A673 (cell line): ENCODE measurements at regions of chr17 and their contacts with region 1.

Region 1: GRCh38 chr17:8057691-8058114 is 18.8 kb downstream of the ALOX15B start:
- DNase-seq: peak; percentile 92
- H3K4me3 ChIP-seq: no peak overlapping the region
- H3K27ac ChIP-seq: no peak overlapping the region
- H3K4me1 ChIP-seq: peaks cover 17% of the 10 kb centered on the region
- H3K27me3 ChIP-seq: peaks cover 14% of the 10 kb centered on the region
- CTCF ChIP-seq: peak; percentile 80

Region 2: DNA sequence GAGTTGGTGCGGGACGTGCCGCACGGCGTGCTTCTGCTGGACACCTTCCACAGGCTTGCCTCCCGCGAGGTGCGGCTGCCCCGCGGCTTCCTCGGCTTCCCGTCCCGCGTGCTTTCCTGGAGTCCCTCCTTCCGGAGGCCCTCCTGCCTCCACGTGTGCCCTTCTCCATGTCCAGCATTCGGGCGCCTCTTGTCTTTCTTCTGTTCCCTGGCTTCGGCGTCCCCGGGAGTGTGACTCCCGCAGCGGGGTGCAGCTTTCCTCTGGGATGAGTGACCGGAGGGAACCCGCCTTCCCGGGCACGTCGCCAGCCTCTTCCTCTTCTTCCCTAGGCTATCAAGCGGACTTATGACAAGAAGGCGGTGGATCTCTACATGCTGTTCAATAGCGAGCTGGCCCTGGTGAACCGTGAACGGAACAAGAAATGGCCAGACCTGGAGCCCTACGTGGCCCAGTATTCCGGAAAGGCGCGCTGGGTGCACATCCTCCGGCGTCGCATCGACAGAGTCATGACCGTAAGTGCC is 317.2 kb before region 1 on chr17:
- CTCF ChIA-PET with region 1: interaction called, 10 read pairs
- POLR2A ChIA-PET with region 1: no interaction called
- intact Hi-C with region 1: loop called (anchors 5 kb)
- DNase-seq: peak; percentile 26
- H3K4me3 ChIP-seq: peak overlapping the region; percentile 9
- H3K27ac ChIP-seq: no peak overlapping the region
- H3K4me1 ChIP-seq: peaks cover 3% of the 10 kb centered on the region
- H3K27me3 ChIP-seq: peaks cover 8% of the 10 kb centered on the region
- CTCF ChIP-seq: no peak

Region 3: GRCh38 chr17:7912927-7913524 is 144.7 kb before region 1 on chr17:
- CTCF ChIA-PET with region 1: interaction called, 5 read pairs
- POLR2A ChIA-PET with region 1: no interaction called
- intact Hi-C with region 1: loop called (anchors 1 kb)
- DNase-seq: peak; percentile 75
- H3K4me3 ChIP-seq: no peak overlapping the region
- H3K27ac ChIP-seq: no peak overlapping the region
- H3K4me1 ChIP-seq: peaks cover 15% of the 10 kb centered on the region
- H3K27me3 ChIP-seq: no peaks in the 10 kb centered on the region
- CTCF ChIP-seq: peak; percentile 70

Region 4: DNA sequence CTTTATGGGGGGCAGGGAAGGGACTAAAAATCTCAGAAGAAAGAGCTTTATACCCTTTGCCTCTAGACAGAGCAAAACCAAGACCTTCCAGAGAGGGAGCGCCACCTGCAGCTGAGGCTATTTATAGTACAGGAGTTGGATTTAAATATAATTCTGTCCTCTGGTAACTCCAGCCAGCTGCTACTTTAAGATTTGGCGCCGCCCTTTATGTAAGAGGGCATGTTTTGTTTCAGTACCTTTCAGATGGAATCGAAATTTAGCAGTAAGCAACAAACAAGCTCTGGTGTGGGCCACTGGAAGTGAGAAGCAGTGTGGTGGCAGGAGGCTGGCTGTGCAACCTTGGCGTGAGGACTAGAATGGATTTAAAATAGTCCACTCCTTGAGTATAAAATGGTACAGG is 60.5 kb before region 1 on chr17:
- CTCF ChIA-PET with region 1: no interaction called
- POLR2A ChIA-PET with region 1: no interaction called
- intact Hi-C with region 1: loop called (anchors 5 kb)
- DNase-seq: peak; percentile 56
- H3K4me3 ChIP-seq: no peak overlapping the region
- H3K27ac ChIP-seq: no peak overlapping the region
- H3K4me1 ChIP-seq: no peaks in the 10 kb centered on the region
- H3K27me3 ChIP-seq: peaks cover 27% of the 10 kb centered on the region
- CTCF ChIP-seq: peak; percentile 56

Region 5: DNA sequence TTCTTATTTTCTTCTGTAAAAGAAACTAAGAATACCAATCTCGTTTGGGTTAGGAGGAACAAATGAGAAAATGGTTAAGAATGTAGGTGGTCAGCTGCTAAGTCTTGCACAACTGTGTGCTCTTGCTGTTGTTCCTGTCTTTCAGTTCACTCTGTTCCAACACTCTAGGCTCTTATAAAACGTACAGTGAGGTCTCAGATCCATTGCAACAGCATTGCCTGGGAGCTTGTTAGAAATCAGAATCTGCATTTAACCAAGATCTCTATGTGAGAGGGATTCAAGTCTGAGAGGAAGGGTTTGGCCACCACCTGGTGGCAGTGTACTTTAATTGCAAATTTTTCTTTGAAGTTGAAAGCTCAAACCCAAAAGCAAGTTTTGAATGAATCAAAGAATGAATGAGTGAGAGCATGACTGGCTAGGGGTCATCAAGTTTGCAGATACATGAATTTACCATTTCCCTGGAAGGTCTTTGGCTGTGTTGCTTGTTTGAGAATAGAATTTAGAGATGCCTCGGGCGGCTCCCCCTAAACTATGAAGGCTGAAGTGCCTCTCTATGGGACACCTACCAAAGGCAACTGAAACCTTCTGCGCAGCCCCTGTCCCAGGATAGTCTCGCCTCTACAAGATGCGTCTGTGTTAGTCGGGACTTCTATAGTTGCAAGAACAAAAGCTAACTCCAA is 16.3 kb before region 1 on chr17:
- CTCF ChIA-PET with region 1: interaction called, 12 read pairs
- POLR2A ChIA-PET with region 1: no interaction called
- intact Hi-C with region 1: loop called (anchors 2 kb)
- DNase-seq: peak; percentile 80
- H3K4me3 ChIP-seq: no peak overlapping the region
- H3K27ac ChIP-seq: no peak overlapping the region
- H3K4me1 ChIP-seq: peaks cover 6% of the 10 kb centered on the region
- H3K27me3 ChIP-seq: no peaks in the 10 kb centered on the region
- CTCF ChIP-seq: peak; percentile 69

Region 6: DNA sequence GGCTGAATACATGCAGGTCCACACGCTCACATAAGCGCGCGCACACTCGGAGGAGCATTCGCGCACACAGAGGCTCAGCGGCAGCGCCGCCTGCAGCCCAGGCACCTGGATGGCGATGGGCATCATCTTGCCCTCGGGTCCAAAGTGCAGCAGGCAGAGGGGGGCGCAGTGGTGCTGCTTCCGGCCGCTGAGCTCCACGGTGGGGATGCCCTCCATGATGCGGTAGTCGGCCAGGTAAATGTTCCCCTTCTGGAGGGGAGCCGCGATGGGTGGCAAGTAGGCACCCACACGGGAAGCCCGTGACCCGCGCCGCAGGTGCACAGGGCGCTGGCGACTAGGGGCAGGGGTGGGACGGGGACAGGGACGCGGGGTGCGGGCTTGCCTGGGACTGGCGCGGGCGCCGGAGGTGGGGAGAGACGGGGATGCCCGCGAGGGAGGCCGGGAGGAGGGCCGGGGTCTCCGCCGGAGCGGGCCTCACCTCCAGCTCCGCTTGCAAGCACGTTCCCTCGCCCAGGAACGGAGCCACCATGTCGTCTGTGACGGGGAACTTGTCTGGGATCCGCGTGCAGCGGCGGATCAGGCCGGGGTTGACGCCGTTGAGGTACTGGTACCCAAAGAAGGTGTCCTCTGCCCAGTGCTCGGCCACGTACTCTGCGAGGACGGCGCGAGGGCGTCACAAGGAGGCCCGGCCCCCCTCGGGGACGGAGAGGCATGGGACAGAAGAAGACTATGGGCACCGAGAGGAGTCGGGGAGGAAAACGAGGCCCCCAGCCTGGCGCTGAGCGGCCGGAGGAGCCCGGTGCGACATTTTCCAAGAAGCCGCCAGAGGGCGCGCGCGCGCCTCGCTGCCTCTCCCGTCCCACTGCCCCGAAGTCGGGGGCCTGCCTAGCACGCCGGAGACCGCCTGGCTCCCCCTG is 21.8 kb after region 1 on chr17:
- CTCF ChIA-PET with region 1: interaction called, 4 read pairs
- POLR2A ChIA-PET with region 1: interaction called, 21 read pairs
- intact Hi-C with region 1: no loop called
- DNase-seq: peak; percentile 80
- H3K4me3 ChIP-seq: peak overlapping the region; percentile 53
- H3K27ac ChIP-seq: no peak overlapping the region
- H3K4me1 ChIP-seq: no peaks in the 10 kb centered on the region
- H3K27me3 ChIP-seq: peaks cover 12% of the 10 kb centered on the region
- CTCF ChIP-seq: peak; percentile 94